ENCODE measurements at regions of chr9 and their contacts with region 1.

Region 1: GRCh38 chr9:107158321-107158720 is 124.8 kb upstream of the RAD23B start:
- DNase-seq: peak; percentile 34
- H3K4me3 ChIP-seq: no peak overlapping the region
- H3K27ac ChIP-seq: no peak overlapping the region
- H3K4me1 ChIP-seq: no peaks in the 10 kb centered on the region
- H3K27me3 ChIP-seq: no peaks in the 10 kb centered on the region
- CTCF ChIP-seq: peak; percentile 52
- EP300 ChIP-seq: no peak
- RAD21 ChIP-seq: peak; percentile 68

Region 2: DNA sequence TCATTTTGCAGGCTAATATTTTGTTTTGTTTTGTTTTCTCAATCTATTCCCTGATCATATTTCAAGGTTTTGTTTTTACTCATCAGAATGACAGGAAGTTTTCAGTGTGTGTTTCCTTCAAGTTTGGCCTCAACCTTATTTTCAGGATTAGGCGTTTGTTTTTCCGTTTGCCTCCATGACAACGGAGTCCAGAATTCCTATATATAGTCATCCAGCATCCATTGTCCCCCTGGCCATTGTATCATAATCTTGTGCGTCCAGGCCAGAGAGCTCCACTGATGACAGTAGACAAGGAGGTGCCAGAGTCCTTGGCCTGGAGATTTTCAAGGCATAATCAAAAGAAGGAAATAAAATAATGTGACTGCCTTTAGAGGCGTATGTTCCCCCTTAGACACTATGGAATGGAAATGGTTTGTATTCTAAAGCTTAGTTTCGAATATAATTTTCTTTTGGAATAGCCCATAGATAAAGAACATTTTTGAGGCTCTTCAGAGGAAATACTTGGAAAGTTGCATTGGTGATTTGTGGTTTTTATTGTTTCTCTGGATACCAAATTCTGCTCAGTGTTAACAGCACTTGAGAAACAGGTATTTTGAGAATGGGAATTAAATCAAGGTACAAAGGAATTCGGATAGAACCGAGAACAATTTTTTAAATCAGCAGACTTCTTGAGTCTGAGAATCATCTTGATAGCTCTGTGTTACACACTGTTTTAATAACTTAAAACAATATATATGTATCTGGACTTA is 195.5 kb before region 1 on chr9:
- CTCF ChIA-PET with region 1: no interaction called
- POLR2A ChIA-PET with region 1: no interaction called
- DNase-seq: no peak
- H3K4me3 ChIP-seq: no peak overlapping the region
- H3K27ac ChIP-seq: no peak overlapping the region
- H3K4me1 ChIP-seq: peaks cover 0 to 5% of the 10 kb centered on the region in 2 experiments; a peak in 1 of 4 replicates
- H3K27me3 ChIP-seq: no peaks in the 10 kb centered on the region
- CTCF ChIP-seq: no peak
- EP300 ChIP-seq: no peak
- RAD21 ChIP-seq: no peak

Region 3: DNA sequence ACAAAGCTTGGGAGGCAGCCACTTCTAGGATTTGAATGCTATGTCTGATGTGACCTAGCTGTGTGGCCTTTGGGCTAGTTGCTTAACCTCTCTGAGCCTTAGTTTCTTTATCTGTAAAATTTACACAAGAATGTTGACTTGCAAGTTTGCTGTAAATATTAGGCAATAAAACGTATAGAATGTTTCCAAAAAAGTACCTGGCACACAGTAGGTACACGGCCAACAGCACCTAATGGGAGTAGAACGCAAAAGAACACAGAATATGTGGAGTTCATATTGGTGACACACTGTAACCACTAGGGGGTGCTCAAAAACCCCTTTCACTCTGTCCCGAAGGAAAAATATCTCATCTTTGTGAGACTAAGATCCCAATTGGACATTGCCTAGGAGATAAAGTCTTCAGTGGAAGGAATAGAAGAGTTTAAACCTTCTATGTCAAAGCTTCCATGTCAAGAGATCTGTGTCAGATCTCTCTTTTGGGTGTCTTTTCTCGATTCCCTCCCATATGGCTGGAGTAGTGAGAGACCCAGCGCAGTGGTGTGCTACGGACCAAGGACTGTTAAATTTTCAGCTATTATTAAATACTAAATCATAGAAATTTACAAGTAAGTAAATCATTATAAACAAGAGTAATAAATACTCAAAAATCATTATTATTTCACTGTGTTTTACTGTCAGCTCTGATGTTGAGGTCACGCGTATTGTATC is 20.7 kb before region 1 on chr9:
- CTCF ChIA-PET with region 1: interaction called, 26 read pairs
- POLR2A ChIA-PET with region 1: no interaction called
- DNase-seq: peak; percentile 45
- H3K4me3 ChIP-seq: no peak overlapping the region; a peak in 1 of 4 replicates
- H3K27ac ChIP-seq: no peak overlapping the region
- H3K4me1 ChIP-seq: peaks cover 0 to 5% of the 10 kb centered on the region in 2 experiments; a peak in 1 of 4 replicates
- H3K27me3 ChIP-seq: no peaks in the 10 kb centered on the region; the same call in 1 of the 2 replicates
- CTCF ChIP-seq: peak; percentile 80
- EP300 ChIP-seq: no peak
- RAD21 ChIP-seq: peak; percentile 65

Region 4: GRCh38 chr9:107144475-107144874 is 13.8 kb before region 1 on chr9:
- CTCF ChIA-PET with region 1: interaction called, 26 read pairs
- POLR2A ChIA-PET with region 1: no interaction called
- DNase-seq: no peak
- H3K4me3 ChIP-seq: no peak overlapping the region
- H3K27ac ChIP-seq: peak overlapping the region in 1 of 2 experiments; percentile 55; a peak in 2 of 4 replicates
- H3K4me1 ChIP-seq: peaks cover 0 to 15% of the 10 kb centered on the region in 2 experiments; a peak in 1 of 4 replicates
- H3K27me3 ChIP-seq: no peaks in the 10 kb centered on the region; the same call in 1 of the 2 replicates
- CTCF ChIP-seq: no peak
- EP300 ChIP-seq: no peak
- RAD21 ChIP-seq: no peak

Region 5: DNA sequence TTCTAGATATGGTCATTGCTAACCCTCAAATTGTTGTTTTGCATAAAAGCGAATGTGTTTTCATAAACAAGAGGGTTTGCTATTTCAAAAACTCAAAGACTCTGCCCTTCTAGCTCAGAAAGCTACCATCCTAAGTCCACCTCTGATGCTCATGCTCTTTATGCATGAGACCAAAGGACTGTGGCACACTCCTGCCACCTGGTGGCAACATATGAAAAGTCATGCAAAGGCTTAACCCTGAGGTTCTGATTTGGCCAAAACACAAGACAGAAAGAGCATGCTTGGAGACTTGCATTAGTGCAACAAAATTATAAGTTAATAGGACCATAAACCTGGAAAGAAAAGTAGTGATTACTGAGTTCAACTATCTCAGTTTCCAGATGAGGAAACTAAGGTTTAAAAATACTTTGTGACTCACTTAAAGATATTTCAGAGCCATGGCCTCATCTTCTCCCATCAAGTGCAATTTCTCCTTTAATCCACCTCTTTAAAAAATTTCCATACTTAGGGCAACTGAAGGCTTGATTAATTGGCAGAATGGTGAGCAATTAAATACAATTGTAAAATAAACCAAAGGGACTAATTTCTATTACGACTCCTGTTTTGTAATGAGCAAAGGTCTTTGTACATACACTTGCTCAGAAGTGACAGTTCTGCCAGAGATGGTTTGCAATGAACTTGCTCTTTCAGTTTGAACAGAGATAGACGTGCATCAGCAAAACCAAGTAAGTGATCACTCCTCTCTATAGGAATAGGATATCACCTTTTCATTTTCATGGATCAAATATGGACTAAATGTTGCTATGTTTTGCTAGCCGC is 14.0 kb after region 1 on chr9:
- CTCF ChIA-PET with region 1: interaction called, 10 read pairs
- POLR2A ChIA-PET with region 1: no interaction called
- DNase-seq: peak; percentile 63
- H3K4me3 ChIP-seq: peak overlapping the region in 1 of 2 experiments; percentile 25; a peak in 1 of 4 replicates
- H3K27ac ChIP-seq: no peak overlapping the region
- H3K4me1 ChIP-seq: peaks cover 10 to 13% of the 10 kb centered on the region in 2 experiments; a peak in 2 of 4 replicates
- H3K27me3 ChIP-seq: no peaks in the 10 kb centered on the region
- CTCF ChIP-seq: peak; percentile 91
- EP300 ChIP-seq: no peak
- RAD21 ChIP-seq: peak; percentile 95

Region 6: GRCh38 chr9:107340920-107341632 is 182.8 kb after region 1 on chr9:
- CTCF ChIA-PET with region 1: interaction called, 23 read pairs
- POLR2A ChIA-PET with region 1: no interaction called
- DNase-seq: peak; percentile 70
- H3K4me3 ChIP-seq: no peak overlapping the region; a peak in 1 of 4 replicates
- H3K27ac ChIP-seq: no peak overlapping the region
- H3K4me1 ChIP-seq: peaks cover 4 to 7% of the 10 kb centered on the region in 2 experiments; a peak in 2 of 4 replicates
- H3K27me3 ChIP-seq: no peaks in the 10 kb centered on the region
- CTCF ChIP-seq: peak; percentile 84
- EP300 ChIP-seq: no peak
- RAD21 ChIP-seq: peak; percentile 70

Measured in SK-N-SH (cell line).